A673 (cell line): ENCODE measurements at regions of chr14 and their contacts with region 1.

Region 1: DNA sequence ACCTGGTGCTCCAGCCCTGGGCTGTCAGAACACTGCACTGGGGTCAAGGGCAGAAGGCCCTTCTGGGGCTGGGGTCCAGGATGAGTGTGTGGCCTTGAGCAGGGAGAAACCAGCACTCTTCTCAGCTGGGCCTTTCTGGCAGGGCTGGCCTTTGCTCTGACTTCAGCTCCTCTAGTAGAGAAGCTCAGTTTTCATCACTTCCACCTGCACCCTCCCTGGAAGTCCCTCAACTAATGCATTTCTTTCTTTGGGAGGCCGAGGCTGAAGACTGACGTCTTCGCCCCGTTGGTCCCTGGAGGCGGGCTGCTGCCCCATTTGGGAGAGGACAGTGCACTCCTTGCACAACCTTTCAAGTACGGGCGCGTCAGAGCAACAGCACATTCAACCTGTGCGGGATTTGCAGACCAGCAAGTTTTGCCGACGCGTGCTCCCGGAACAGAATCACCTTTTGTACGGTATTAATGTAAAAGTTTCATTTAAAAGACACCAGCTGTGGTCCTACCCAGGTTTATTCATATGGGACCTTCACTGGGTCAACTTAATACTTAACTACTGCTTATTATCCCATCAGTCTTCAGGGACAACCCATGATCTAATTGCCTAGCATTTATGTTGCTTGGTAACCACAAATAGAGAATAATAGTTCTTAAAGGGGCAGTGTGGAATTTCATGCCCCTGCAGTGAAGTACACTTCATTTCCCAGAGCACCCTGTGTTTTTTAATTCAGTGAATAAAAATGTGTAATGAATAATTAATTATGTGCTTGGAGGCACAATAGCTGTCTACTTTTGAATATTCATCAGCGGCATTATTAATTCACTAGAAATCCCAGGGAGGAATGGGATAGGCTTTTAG is 134.8 kb upstream of the VRK1 start:
- DNase-seq: peak; percentile 77
- H3K4me3 ChIP-seq: peak overlapping the region; percentile 7
- H3K27ac ChIP-seq: no peak overlapping the region
- H3K4me1 ChIP-seq: peaks cover 34% of the 10 kb centered on the region
- H3K27me3 ChIP-seq: no peaks in the 10 kb centered on the region
- CTCF ChIP-seq: no peak

Region 2: DNA sequence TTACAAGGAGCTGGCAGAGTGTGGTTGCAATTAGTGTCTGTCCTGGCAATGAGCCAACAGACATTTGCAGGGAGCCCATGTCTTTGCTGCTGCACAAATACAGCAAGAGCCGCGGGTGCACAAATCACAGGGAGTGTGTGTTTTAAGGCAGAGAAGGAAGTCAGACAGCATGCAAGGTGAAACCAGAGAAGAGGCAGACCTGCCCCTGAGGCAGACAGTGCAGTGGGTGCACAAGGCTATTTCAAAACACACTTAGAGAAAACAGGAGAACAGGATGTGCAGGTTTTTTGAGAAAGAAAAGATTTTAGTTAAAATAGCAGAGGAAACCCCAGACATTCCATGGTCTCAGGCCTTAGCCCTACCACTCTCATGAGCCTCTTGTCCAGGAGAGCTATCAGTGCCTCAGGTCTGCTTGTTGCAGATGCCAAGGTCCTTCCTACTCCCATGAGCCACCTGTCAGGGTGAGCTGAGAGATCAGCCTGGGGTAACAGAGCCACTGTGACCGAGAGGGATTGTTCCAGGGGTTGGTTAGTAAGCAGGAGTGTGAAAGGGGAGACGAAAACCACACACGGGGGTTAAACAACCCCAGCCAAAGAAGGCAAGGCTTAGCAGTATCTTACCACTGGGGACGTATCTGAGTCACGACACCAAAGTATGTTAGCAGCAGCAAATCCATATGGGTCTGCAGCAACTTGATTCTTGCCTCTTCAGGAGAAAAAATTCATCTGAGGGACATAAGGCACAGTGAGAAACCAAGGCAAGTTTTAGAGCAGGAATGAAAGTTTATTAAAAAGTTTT is 545.0 kb before region 1 on chr14:
- CTCF ChIA-PET with region 1: no interaction called
- POLR2A ChIA-PET with region 1: no interaction called
- intact Hi-C with region 1: no loop called
- DNase-seq: peak; percentile 56
- H3K4me3 ChIP-seq: no peak overlapping the region
- H3K27ac ChIP-seq: no peak overlapping the region
- H3K4me1 ChIP-seq: peaks cover 6% of the 10 kb centered on the region
- H3K27me3 ChIP-seq: no peaks in the 10 kb centered on the region
- CTCF ChIP-seq: no peak

Region 3: GRCh38 chr14:96574633-96575632 is 87.4 kb before region 1 on chr14:
- CTCF ChIA-PET with region 1: no interaction called
- POLR2A ChIA-PET with region 1: no interaction called
- intact Hi-C with region 1: loop called (anchors 5 kb)
- DNase-seq: peak; percentile 15
- H3K4me3 ChIP-seq: no peak overlapping the region
- H3K27ac ChIP-seq: peak overlapping the region; percentile 18
- H3K4me1 ChIP-seq: peaks cover 22% of the 10 kb centered on the region
- H3K27me3 ChIP-seq: no peaks in the 10 kb centered on the region
- CTCF ChIP-seq: no peak

Region 4: DNA sequence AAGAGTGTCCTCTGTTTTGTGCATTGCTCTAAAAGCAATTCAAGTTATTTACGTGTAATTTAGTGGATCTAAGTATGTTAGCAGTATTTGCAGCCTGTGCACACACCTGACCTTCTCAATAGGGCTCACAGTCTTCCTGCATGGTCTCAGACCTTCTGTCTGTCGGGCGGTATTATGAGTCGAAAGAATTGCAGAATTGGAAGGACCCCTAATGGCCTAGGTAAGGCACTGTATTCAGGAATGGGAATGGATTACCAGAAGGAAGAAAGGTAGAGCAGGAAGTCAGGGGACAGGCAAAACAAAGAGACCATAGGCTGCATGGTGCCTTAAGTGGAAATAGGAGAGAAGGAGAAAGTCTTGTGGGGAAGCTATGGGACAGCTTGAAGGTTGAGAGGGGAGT is 476.5 kb after region 1 on chr14:
- CTCF ChIA-PET with region 1: no interaction called
- POLR2A ChIA-PET with region 1: no interaction called
- intact Hi-C with region 1: no loop called
- DNase-seq: no peak
- H3K4me3 ChIP-seq: no peak overlapping the region
- H3K27ac ChIP-seq: no peak overlapping the region
- H3K4me1 ChIP-seq: no peaks in the 10 kb centered on the region
- H3K27me3 ChIP-seq: no peaks in the 10 kb centered on the region
- CTCF ChIP-seq: peak; percentile 37; the same call in 1 of the 2 replicates